ENCODE measurements at regions of chr3 and their contacts with region 1.

Region 1: DNA sequence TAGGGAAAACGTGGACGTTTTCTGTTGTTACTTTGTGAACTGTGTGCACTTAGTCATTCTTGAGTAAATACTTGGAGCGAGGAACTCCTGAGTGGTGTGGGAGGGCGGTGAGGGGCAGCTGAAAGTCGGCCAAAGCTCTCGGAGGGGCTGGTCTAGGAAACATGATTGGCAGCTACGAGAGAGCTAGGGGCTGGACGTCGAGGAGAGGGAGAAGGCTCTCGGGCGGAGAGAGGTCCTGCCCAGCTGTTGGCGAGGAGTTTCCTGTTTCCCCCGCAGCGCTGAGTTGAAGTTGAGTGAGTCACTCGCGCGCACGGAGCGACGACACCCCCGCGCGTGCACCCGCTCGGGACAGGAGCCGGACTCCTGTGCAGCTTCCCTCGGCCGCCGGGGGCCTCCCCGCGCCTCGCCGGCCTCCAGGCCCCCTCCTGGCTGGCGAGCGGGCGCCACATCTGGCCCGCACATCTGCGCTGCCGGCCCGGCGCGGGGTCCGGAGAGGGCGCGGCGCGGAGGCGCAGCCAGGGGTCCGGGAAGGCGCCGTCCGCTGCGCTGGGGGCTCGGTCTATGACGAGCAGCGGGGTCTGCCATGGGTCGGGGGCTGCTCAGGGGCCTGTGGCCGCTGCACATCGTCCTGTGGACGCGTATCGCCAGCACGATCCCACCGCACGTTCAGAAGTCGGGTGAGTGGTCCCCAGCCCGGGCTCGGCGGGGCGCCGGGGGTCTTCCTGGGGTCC is at the start of gene TGFBR2:
- DNase-seq: peak; percentile 61 to 91 (median 79)
- ATAC-seq: peak; percentile 62
- H3K4me3 ChIP-seq: peak within 1 kb of the TSS; percentile 73
- H3K4me3 Mint-ChIP-seq: peak within 1 kb of the TSS; percentile 99
- H3K27ac ChIP-seq: peak within 1 kb of the TSS; percentile 61 to 91
- H3K27ac Mint-ChIP-seq: peak within 1 kb of the TSS; percentile 96
- H3K4me1 ChIP-seq: peaks cover 28% of the 10 kb centered on the region
- H3K4me1 Mint-ChIP-seq: peaks cover 63% of the 10 kb centered on the region
- H3K27me3 ChIP-seq: no peaks in the 10 kb centered on the region
- H3K27me3 Mint-ChIP-seq: no peaks in the 10 kb centered on the region
- CTCF ChIP-seq: no peak
- total RNA-seq, gene TGFBR2: 203 to 205 TPM

Region 2: GRCh38 chr3:30112902-30113484 is 493.5 kb before region 1 on chr3:
- CTCF ChIA-PET with region 1: no interaction called
- POLR2A ChIA-PET with region 1: no interaction called
- intact Hi-C with region 1: loop called in 1 of 2 experiments (anchors 10 kb)
- DNase-seq: peak in 3 of 14 experiments; percentile 56 to 57 (median 57)
- ATAC-seq: no peak
- H3K4me3 ChIP-seq: no peak overlapping the region
- H3K4me3 Mint-ChIP-seq: no peak overlapping the region
- H3K27ac ChIP-seq: no peak overlapping the region
- H3K27ac Mint-ChIP-seq: no peak overlapping the region
- H3K4me1 ChIP-seq: no peaks in the 10 kb centered on the region
- H3K4me1 Mint-ChIP-seq: peaks cover 7% of the 10 kb centered on the region
- H3K27me3 ChIP-seq: no peaks in the 10 kb centered on the region
- H3K27me3 Mint-ChIP-seq: peaks cover 5% of the 10 kb centered on the region
- CTCF ChIP-seq: peak; percentile 73

Region 3: GRCh38 chr3:30437171-30437601 is 169.3 kb before region 1 on chr3:
- CTCF ChIA-PET with region 1: no interaction called
- POLR2A ChIA-PET with region 1: interaction called, 15 read pairs
- intact Hi-C with region 1: no loop called
- DNase-seq: no peak
- ATAC-seq: no peak
- H3K4me3 ChIP-seq: no peak overlapping the region
- H3K4me3 Mint-ChIP-seq: peak overlapping the region; percentile 51
- H3K27ac ChIP-seq: no peak overlapping the region
- H3K27ac Mint-ChIP-seq: peak overlapping the region; percentile 85
- H3K4me1 ChIP-seq: no peaks in the 10 kb centered on the region
- H3K4me1 Mint-ChIP-seq: peaks cover 39% of the 10 kb centered on the region
- H3K27me3 ChIP-seq: no peaks in the 10 kb centered on the region
- H3K27me3 Mint-ChIP-seq: no peaks in the 10 kb centered on the region
- CTCF ChIP-seq: no peak

Region 4: DNA sequence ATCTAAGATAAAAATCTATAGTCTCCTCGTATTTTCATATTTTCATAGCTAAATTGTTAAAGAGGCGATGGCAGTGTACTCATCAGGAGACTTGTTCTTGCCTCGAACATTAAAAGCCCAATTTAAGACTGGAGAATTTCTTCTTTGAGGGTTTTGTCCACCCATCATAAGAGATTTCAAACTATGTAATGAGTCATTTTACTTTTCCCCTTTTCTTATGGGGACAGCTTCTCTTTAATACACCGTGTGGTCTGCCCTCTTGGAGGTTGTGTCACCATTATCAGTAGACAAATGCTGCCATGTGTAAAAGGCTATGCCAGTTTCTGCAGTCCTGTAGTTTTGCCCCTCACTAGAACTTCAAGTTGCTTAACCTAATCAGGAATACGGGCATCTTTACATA is 16.9 kb after region 1 on chr3:
- CTCF ChIA-PET with region 1: interaction called, 3 read pairs
- POLR2A ChIA-PET with region 1: interaction called, 80 read pairs
- intact Hi-C with region 1: no loop called
- DNase-seq: peak in 1 of 14 experiments; percentile 42
- ATAC-seq: no peak
- H3K4me3 ChIP-seq: no peak overlapping the region
- H3K4me3 Mint-ChIP-seq: peak overlapping the region; percentile 66
- H3K27ac ChIP-seq: peak overlapping the region; percentile 25 to 38
- H3K27ac Mint-ChIP-seq: peak overlapping the region; percentile 96
- H3K4me1 ChIP-seq: peaks cover 65% of the 10 kb centered on the region
- H3K4me1 Mint-ChIP-seq: peaks cover 98% of the 10 kb centered on the region
- H3K27me3 ChIP-seq: no peaks in the 10 kb centered on the region
- H3K27me3 Mint-ChIP-seq: no peaks in the 10 kb centered on the region
- CTCF ChIP-seq: no peak

Region 5: DNA sequence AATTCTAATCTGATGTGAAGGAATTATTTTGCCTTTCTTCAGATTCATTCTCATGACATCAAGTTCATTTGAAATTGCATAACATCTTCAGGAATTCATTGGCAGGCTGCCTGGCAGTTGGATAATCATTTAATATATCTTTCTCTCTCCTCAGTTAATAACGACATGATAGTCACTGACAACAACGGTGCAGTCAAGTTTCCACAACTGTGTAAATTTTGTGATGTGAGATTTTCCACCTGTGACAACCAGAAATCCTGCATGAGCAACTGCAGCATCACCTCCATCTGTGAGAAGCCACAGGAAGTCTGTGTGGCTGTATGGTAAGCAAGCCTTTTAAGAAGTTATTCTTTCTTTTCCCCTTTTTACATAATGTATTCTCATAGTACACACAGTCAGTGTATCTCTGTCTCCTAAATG is 38.1 kb after region 1 on chr3:
- CTCF ChIA-PET with region 1: interaction called, 5 read pairs
- POLR2A ChIA-PET with region 1: interaction called, 43 read pairs
- intact Hi-C with region 1: loop called (anchors 5 kb)
- DNase-seq: peak in 10 of 14 experiments; percentile 26 to 87 (median 50)
- ATAC-seq: peak; percentile 62
- H3K4me3 ChIP-seq: peak overlapping the region; percentile 14
- H3K4me3 Mint-ChIP-seq: peak overlapping the region; percentile 79
- H3K27ac ChIP-seq: peak overlapping the region; percentile 72 to 76
- H3K27ac Mint-ChIP-seq: peak overlapping the region; percentile 96
- H3K4me1 ChIP-seq: peaks cover 85% of the 10 kb centered on the region
- H3K4me1 Mint-ChIP-seq: peaks cover 99% of the 10 kb centered on the region
- H3K27me3 ChIP-seq: no peaks in the 10 kb centered on the region
- H3K27me3 Mint-ChIP-seq: no peaks in the 10 kb centered on the region
- CTCF ChIP-seq: no peak

Region 6: DNA sequence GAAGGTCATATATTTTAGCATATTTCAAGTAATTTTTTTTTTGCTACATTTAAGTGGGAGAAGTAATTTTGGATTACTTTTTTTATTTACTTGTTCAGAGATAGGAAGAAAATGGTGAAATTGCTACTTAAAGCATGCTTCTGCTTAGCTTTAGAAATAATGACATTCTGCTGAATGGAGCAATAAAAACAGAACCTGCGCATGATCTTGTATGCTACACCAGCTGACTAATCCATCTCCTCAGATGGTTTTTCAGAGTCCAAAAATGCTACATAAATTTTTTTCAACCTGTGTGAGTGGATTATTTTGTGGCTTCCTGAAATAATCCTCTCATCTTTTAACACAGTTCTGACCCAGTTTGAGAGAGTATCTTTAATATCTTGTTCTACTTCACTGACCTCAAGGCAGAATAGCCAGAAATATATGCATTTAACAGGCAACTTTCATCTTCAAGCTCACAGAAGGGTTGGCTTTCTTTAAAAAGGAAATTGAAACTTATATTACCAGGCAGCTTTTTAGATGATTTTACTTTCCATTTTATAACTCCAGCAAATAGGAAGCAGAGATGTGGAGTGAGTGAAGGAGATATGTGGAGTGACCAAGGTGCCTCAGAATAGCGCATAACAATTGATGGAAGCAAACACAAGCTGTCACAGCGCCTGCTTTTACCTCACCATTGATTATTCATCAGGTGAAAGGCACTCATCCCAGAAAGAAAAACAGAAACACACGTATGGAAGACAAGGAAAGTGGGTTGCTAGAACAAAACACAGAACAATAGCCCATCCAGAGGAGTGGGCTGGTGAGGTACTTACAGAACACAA is 136.5 kb after region 1 on chr3:
- CTCF ChIA-PET with region 1: no interaction called
- POLR2A ChIA-PET with region 1: no interaction called
- intact Hi-C with region 1: no loop called
- DNase-seq: no peak
- ATAC-seq: no peak
- H3K4me3 ChIP-seq: no peak overlapping the region
- H3K4me3 Mint-ChIP-seq: no peak overlapping the region
- H3K27ac ChIP-seq: no peak overlapping the region
- H3K27ac Mint-ChIP-seq: no peak overlapping the region
- H3K4me1 ChIP-seq: no peaks in the 10 kb centered on the region
- H3K4me1 Mint-ChIP-seq: peaks cover 25% of the 10 kb centered on the region
- H3K27me3 ChIP-seq: no peaks in the 10 kb centered on the region
- H3K27me3 Mint-ChIP-seq: no peaks in the 10 kb centered on the region
- CTCF ChIP-seq: no peak